ENCODE measurements at regions of chr18 and their contacts with region 1.

Region 1: GRCh38 chr18:34352385-34353163 is 127.9 kb upstream of the NOL4 start:
- H3K4me3 ChIP-seq: no peak overlapping the region
- H3K27ac ChIP-seq: no peak overlapping the region
- H3K4me1 ChIP-seq: no peaks in the 10 kb centered on the region
- CTCF ChIP-seq: no peak

Region 2: DNA sequence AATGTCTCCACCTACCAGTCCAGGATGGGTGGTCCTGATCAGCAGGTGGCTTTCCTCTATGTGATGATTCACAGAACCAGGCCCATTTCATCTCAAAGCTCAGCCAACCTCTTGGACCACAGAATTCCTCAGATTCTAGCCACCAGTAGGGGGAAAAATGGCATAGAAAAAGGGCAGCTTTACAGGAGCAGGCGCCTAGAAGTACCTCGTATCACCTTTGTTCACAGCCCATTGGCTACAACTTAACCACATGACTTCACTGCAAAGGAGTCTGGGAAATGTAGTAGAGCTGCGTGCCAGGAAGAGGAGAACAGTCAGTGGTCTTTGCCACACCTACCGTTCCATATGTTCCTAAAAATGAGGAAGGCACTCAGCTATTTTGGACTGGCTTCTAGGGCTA is 294.7 kb after region 1 on chr18:
- CTCF ChIA-PET with region 1: interaction called, 12 read pairs
- POLR2A ChIA-PET with region 1: no interaction called
- H3K4me3 ChIP-seq: no peak overlapping the region
- H3K27ac ChIP-seq: no peak overlapping the region
- H3K4me1 ChIP-seq: peaks cover 11% of the 10 kb centered on the region
- CTCF ChIP-seq: no peak

Region 3: DNA sequence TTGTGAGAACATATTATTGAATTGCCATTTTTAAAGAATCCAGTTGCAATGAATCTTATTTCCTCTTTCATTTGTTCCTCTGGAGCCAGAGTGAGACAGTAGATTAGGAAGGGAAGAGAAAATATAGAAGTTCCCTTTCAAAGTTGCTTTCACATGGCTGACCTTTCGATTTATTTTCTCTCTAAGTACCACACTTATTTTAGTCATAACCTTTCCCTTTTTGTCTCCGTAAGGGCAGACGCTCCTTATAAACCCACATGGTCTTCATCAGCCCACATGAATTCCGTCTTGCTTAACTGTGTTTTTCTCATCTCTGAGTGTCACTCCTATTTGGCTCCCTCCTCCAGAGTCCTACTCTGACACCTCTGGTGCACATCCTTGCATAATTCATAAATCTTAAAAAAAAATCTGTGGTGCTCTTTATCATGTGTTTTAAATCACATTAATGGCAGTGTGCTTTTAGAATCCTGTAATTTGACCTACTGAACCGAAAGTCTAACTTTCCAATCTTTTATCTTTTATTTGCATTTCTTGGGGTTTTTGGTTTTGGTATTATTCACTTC is 1063.0 kb after region 1 on chr18:
- CTCF ChIA-PET with region 1: no interaction called
- POLR2A ChIA-PET with region 1: no interaction called
- H3K4me3 ChIP-seq: no peak overlapping the region
- H3K27ac ChIP-seq: no peak overlapping the region
- H3K4me1 ChIP-seq: no peaks in the 10 kb centered on the region
- CTCF ChIP-seq: no peak